ENCODE measurements at regions of chr3 and their contacts with region 1.

Region 1: DNA sequence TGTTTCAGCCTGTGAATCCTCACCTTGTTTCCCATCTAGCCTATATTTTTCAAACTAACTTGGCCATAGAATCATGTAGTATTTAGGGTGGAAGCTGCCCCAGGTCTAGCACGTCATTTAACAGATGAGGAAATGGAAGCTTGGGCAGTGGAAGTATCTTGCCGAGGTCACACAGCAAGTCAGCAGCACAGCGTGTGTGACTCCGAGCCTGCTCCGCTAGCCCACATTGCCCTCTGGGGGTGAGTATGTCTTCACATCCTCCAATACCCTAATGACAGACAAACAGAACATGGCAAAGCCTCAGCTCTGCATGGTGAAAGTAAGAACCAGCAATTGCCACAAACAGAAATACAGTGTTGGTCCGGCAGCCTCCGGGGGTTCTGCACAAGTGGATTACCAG is 2.2 kb upstream of the CCR5 start:
- DNase-seq: peak; percentile 75
- H3K4me3 Mint-ChIP-seq: no peak overlapping the region
- H3K27ac Mint-ChIP-seq: no peak overlapping the region
- H3K4me1 Mint-ChIP-seq: peaks cover 21% of the 10 kb centered on the region
- H3K27me3 Mint-ChIP-seq: peaks cover 16% of the 10 kb centered on the region

Region 2: DNA sequence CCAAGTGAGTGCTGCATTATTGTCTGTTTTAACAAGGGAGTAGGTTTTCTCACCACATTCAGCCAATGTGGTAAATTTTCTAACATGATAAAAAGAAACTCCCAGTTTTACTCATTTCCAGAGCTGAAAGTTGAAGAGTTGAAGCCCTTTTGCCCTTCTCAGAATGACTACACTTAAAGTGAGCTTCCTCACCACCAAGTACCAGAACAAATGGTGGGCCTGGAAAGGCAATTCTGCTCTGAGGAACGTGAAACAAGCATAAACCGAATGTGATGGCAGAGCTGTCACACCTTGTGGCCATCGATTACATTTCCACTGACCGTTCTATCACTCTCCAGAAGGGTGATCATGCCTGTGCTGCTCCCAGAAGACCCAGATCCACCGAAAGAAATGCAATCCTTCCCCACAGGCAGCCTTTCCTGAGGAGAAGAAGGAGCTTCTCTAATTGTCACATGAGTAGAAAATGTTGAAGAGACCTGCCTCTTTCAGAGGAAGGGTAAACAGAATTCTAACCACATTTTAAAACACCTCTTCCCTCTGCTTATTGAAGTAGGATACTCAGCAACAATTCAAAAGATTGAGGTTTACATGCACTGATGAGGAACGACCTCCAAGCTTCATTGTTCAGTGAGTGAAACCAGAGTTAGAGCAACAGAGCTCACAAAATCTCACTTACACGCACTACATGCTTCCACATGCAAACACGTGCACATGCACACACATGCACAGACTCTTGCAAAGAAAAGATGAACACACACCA is 503.6 kb before region 1 on chr3:
- CTCF ChIA-PET with region 1: no interaction called
- intact Hi-C with region 1: loop called (anchors 5 kb)
- DNase-seq: peak; percentile 48
- H3K4me3 Mint-ChIP-seq: no peak overlapping the region
- H3K27ac Mint-ChIP-seq: no peak overlapping the region
- H3K4me1 Mint-ChIP-seq: peaks cover 44% of the 10 kb centered on the region
- H3K27me3 Mint-ChIP-seq: peaks cover 53% of the 10 kb centered on the region

Region 3: DNA sequence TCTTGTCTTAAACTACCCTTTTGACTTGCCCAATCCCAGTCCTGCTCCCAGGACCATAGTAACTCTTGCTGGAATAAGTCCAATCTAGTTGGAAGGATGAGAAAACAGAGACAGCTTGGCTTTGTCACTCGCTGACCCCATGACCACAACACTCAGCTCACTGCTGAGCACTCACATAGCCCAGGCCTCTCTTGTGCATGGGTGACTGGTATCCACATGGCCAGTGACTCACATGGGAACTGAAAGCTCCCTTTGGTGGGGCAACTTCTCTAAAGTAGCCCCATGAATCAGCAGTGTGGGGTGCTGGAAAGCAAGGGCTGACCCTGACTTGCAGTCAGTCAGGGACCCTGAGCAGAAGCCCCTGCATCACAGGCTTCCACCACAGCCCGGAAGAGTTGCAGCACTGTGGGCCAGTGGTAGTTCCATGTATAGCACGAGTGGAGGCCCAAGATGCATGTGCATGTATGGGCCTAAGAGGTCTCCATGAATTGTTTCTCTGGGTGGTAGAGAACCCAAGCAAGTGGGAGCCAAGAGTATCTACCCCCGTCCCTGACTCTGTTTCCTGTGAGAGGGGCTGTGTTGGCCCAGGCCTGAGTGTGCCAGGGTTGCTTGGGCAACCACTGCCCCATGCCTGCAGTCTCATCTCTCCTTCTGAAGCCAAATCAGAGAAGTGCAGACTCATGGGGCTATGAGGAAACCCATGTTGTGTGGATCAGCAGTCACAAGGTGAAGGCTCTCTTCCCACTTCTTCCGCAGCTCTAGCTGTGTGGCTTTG is 279.1 kb before region 1 on chr3:
- CTCF ChIA-PET with region 1: interaction called, 7 read pairs
- intact Hi-C with region 1: loop called (anchors 2 kb)
- DNase-seq: no peak
- H3K4me3 Mint-ChIP-seq: no peak overlapping the region
- H3K27ac Mint-ChIP-seq: no peak overlapping the region
- H3K4me1 Mint-ChIP-seq: peaks cover 9% of the 10 kb centered on the region
- H3K27me3 Mint-ChIP-seq: peaks cover 30% of the 10 kb centered on the region

Region 4: GRCh38 chr3:46214751-46215352 is 153.7 kb before region 1 on chr3:
- CTCF ChIA-PET with region 1: interaction called, 25 read pairs
- intact Hi-C with region 1: loop called (anchors 1 kb)
- DNase-seq: peak; percentile 47
- H3K4me3 Mint-ChIP-seq: no peak overlapping the region
- H3K27ac Mint-ChIP-seq: no peak overlapping the region
- H3K4me1 Mint-ChIP-seq: no peaks in the 10 kb centered on the region
- H3K27me3 Mint-ChIP-seq: no peaks in the 10 kb centered on the region

Region 5: DNA sequence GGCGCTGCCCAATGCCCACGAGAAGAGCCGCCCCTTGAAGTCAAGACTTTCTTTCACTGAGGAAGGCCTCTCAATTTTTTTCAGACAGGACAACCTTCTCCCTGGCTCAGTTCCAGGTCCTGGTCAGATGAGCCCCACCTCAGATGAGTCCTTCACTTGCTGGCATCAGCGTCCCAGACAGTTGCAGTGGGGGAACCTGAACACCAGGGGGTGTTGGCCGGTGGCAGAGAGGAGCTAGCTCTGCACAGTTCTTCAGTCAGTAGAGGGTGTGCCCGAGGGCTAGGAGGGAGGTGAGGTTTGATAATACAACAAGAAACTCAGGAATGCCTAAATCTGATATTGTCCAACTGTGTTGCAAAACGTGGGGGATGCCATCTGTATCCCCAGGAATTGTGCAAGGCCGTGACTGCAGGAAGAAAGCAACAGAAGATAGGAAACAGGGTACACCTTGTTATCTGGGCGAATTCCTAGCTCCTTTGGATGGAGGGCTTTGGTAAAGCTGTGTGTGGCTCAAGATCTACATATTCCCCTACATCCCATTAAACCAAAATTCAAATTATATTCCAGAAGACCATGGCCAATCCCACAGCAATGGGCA is 92.0 kb before region 1 on chr3:
- CTCF ChIA-PET with region 1: interaction called, 63 read pairs
- intact Hi-C with region 1: loop called (anchors 1 kb)
- DNase-seq: peak; percentile 87
- H3K4me3 Mint-ChIP-seq: no peak overlapping the region
- H3K27ac Mint-ChIP-seq: no peak overlapping the region
- H3K4me1 Mint-ChIP-seq: peaks cover 20% of the 10 kb centered on the region
- H3K27me3 Mint-ChIP-seq: peaks cover 14% of the 10 kb centered on the region

Measured in activated naive CD4-positive, alpha-beta T cell treated with anti-CD3 and anti-CD28 coated beads for 36 hours (primary cell).